K562 (cell line): ENCODE measurements at regions of chrX and their contacts with region 1.

Region 1: GRCh38 chrX:15242899-15243555 is 26.9 kb downstream of the ASB9 start:
- DNase-seq: peak; percentile 16 to 62 (median 24)
- ATAC-seq: peak; percentile 75
- H3K4me3 ChIP-seq: no peak overlapping the region
- H3K27ac ChIP-seq: no peak overlapping the region
- H3K4me1 ChIP-seq: no peaks in the 10 kb centered on the region
- H3K27me3 ChIP-seq: no peaks in the 10 kb centered on the region
- CTCF ChIP-seq: peak in 2 of 3 experiments; percentile 52 to 72; a peak in 4 of 6 replicates
- EP300 ChIP-seq: no peak
- POLR2A ChIP-seq: no peak
- RAD21 ChIP-seq: peak; percentile 55 to 75

Region 2: GRCh38 chrX:14963447-14964236 is 279.4 kb before region 1 on chrX:
- CTCF ChIA-PET with region 1: no interaction called
- POLR2A ChIA-PET with region 1: no interaction called
- in situ Hi-C with region 1: no loop called
- intact Hi-C with region 1: loop called (anchors 10 kb)
- DNase-seq: no peak
- ATAC-seq: no peak
- H3K4me3 ChIP-seq: no peak overlapping the region
- H3K27ac ChIP-seq: no peak overlapping the region
- H3K4me1 ChIP-seq: no peaks in the 10 kb centered on the region
- H3K27me3 ChIP-seq: no peaks in the 10 kb centered on the region
- CTCF ChIP-seq: no peak
- EP300 ChIP-seq: no peak
- POLR2A ChIP-seq: no peak
- RAD21 ChIP-seq: no peak

Region 3: DNA sequence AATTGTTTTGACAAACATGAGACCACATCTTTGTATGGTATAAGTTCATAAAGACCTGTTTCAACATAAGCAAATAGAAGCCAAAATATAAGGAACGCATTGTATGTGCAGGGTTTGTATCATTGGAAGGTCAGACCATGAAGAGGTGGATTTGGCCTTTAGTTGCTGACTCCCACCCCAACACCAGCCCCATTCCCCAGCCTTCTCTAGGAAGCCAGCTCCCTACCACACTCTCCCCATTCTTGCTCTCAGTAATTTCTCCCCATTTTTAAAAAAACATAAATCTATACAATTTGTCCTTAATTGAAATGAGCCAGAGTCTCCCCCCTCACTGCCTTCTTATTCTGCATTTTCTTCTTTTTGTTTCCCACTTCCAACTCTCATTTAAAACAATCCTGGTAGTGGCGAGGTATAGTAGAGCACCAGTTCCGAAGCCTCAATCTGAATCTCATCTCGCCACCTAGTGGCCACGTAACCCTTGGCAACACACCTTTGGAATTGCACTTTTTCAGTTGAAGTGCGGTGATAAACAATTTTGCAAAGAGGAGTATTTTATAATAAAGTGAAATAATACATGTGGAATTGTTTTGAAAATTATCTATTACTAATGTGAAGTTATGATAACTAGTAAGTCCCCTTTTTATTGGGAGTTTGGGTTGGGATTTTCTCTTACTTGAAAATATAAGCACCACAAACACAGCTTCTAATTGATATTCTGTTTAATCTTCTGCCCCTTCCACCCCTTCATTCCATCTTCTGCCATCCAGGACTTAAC is 99.8 kb before region 1 on chrX:
- CTCF ChIA-PET with region 1: interaction called, 4 read pairs
- POLR2A ChIA-PET with region 1: no interaction called
- in situ Hi-C with region 1: no loop called
- intact Hi-C with region 1: loop called (anchors 1 kb)
- DNase-seq: peak; percentile 25 to 60 (median 26)
- ATAC-seq: peak; percentile 93
- H3K4me3 ChIP-seq: no peak overlapping the region
- H3K27ac ChIP-seq: no peak overlapping the region
- H3K4me1 ChIP-seq: no peaks in the 10 kb centered on the region
- H3K27me3 ChIP-seq: no peaks in the 10 kb centered on the region
- CTCF ChIP-seq: peak; percentile 58 to 62 (median 60)
- EP300 ChIP-seq: no peak
- POLR2A ChIP-seq: no peak
- RAD21 ChIP-seq: peak; percentile 58 to 63